HepG2 (cell line): ENCODE measurements at regions of chr9 and their contacts with region 1.

Region 1: GRCh38 chr9:125789196-125789595 is 42.0 kb downstream of the PBX3 start:
- DNase-seq: no peak
- ATAC-seq: no peak
- H3K4me3 ChIP-seq: no peak overlapping the region
- H3K27ac ChIP-seq: no peak overlapping the region
- H3K4me1 ChIP-seq: peaks cover 24% of the 10 kb centered on the region
- H3K27me3 ChIP-seq: no peaks in the 10 kb centered on the region
- CTCF ChIP-seq: no peak
- EP300 ChIP-seq: no peak
- POLR2A ChIP-seq: no peak
- RAD21 ChIP-seq: no peak

Region 2: GRCh38 chr9:125767349-125767748 is 21.8 kb before region 1 on chr9:
- CTCF ChIA-PET with region 1: no interaction called
- POLR2A ChIA-PET with region 1: no interaction called
- in situ Hi-C with region 1: no loop called
- intact Hi-C with region 1: loop called (anchors 1 kb)
- DNase-seq: no peak
- ATAC-seq: no peak
- H3K4me3 ChIP-seq: no peak overlapping the region
- H3K27ac ChIP-seq: no peak overlapping the region
- H3K4me1 ChIP-seq: peaks cover 11% of the 10 kb centered on the region; the same call in 1 of the 2 replicates
- H3K27me3 ChIP-seq: no peaks in the 10 kb centered on the region
- CTCF ChIP-seq: no peak
- EP300 ChIP-seq: no peak
- POLR2A ChIP-seq: no peak
- RAD21 ChIP-seq: no peak